ENCODE measurements at regions of chr14 and their contacts with region 1.

Region 1: DNA sequence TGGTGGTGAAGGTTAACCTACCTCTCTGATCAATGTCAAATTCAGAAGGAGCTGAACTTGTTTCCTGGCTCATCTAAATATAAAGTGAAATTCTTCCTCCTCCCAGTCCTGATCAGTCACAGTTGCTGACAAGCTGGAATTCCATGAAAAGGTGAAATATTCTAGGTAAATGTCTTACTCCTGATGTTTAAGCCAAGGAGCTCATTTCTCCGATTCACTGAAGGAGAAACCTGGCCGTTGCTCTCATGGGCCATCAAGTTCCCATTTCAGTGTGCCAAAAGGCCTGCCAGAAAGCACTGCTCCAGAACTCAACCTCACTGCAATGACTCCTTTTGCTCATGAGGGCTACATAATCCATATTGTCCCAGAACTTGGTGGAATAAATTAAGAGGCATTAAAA is 707.5 kb downstream of the GALC start:
- DNase-seq: no peak
- H3K4me3 ChIP-seq: no peak overlapping the region
- H3K27ac ChIP-seq: no peak overlapping the region
- H3K4me1 ChIP-seq: no peaks in the 10 kb centered on the region
- CTCF ChIP-seq: no peak

Region 2: GRCh38 chr14:86391085-86391484 is 894.4 kb before region 1 on chr14:
- CTCF ChIA-PET with region 1: no interaction called
- POLR2A ChIA-PET with region 1: interaction called, 10 read pairs
- intact Hi-C with region 1: no loop called
- DNase-seq: no peak
- H3K4me3 ChIP-seq: no peak overlapping the region
- H3K27ac ChIP-seq: no peak overlapping the region
- H3K4me1 ChIP-seq: no peaks in the 10 kb centered on the region
- CTCF ChIP-seq: no peak